ENCODE measurements at regions of chr2 and their contacts with region 1.

Region 1: GRCh38 chr2:85420536-85421259 is 2.2 kb downstream of the SH2D6 start:
- DNase-seq: peak; percentile 98
- H3K4me3 Mint-ChIP-seq: peak overlapping the region; percentile 62
- H3K27ac Mint-ChIP-seq: peak overlapping the region; percentile 88
- H3K4me1 Mint-ChIP-seq: peaks cover 28% of the 10 kb centered on the region
- H3K27me3 Mint-ChIP-seq: no peaks in the 10 kb centered on the region

Region 2: GRCh38 chr2:85215448-85216401 is 205.0 kb before region 1 on chr2:
- intact Hi-C with region 1: no loop called
- DNase-seq: no peak
- H3K4me3 Mint-ChIP-seq: no peak overlapping the region
- H3K27ac Mint-ChIP-seq: no peak overlapping the region
- H3K4me1 Mint-ChIP-seq: no peaks in the 10 kb centered on the region
- H3K27me3 Mint-ChIP-seq: peaks cover 22% of the 10 kb centered on the region

Region 3: GRCh38 chr2:85307527-85307897 is 113.2 kb before region 1 on chr2:
- intact Hi-C with region 1: no loop called
- DNase-seq: no peak
- H3K4me3 Mint-ChIP-seq: peak overlapping the region; percentile 54
- H3K27ac Mint-ChIP-seq: no peak overlapping the region
- H3K4me1 Mint-ChIP-seq: peaks cover 26% of the 10 kb centered on the region
- H3K27me3 Mint-ChIP-seq: peaks cover 9% of the 10 kb centered on the region

Region 4: DNA sequence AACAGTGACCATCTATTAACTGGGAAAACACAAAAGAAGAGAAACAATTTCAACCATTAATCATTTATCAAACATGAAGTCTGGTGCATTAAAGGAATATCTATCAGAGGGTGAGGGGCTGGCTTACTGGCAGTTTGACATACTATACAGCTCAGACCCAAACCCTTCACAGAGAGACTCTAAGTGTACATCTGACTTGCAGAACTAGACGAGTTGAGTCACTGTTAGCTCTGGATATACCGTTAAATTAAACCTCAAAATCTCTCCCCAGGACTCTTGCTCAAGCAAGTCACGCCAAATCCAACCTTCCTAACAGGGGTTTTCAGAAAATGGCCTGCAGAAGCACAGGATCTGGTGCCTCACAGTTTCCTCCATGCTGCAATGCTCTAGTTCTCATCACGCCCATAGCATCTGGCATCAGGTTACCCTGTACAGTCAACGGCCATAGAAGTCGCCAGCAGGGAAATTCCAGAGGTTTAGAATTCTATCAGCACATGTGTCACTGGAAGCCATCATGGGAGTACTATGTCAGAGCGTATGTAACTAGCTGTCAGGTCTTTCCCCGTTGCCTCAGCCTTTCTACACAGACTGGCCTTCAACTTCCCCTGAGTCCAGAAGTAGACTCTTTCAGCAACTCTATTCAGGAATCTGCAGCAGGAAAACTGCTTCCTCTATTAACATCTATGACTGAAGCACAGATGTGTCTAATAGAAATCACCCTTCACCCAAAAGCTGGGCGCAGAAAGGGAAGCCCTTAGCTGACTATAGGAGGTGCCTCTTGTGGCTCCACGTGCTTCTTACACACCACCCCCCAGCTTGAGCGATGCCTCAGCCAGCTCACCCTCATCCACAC is 102.2 kb before region 1 on chr2:
- intact Hi-C with region 1: no loop called
- DNase-seq: no peak
- H3K4me3 Mint-ChIP-seq: peak overlapping the region; percentile 35
- H3K27ac Mint-ChIP-seq: peak overlapping the region; percentile 89
- H3K4me1 Mint-ChIP-seq: peaks cover 48% of the 10 kb centered on the region
- H3K27me3 Mint-ChIP-seq: no peaks in the 10 kb centered on the region

Region 5: GRCh38 chr2:85354286-85355072 is 66.2 kb before region 1 on chr2 and contains the starts of genes ELMOD3 and RETSAT:
- intact Hi-C with region 1: loop called (anchors 1 kb)
- DNase-seq: peak; percentile 99
- H3K4me3 Mint-ChIP-seq: peak within 1 kb of the TSS; percentile 94
- H3K27ac Mint-ChIP-seq: peak within 1 kb of the TSS; percentile 94
- H3K4me1 Mint-ChIP-seq: peaks cover 26% of the 10 kb centered on the region
- H3K27me3 Mint-ChIP-seq: no peaks in the 10 kb centered on the region
- total RNA-seq, gene ELMOD3: 16.7 and 18.2 TPM in 2 replicates
- total RNA-seq, gene RETSAT: 21.0 and 25.0 TPM in 2 replicates

Region 6: GRCh38 chr2:85405076-85405402 is 15.7 kb before region 1 on chr2:
- intact Hi-C with region 1: loop called (anchors 1 kb)
- DNase-seq: no peak
- H3K4me3 Mint-ChIP-seq: peak overlapping the region; percentile 76
- H3K27ac Mint-ChIP-seq: peak overlapping the region; percentile 86
- H3K4me1 Mint-ChIP-seq: peaks cover 39% of the 10 kb centered on the region
- H3K27me3 Mint-ChIP-seq: no peaks in the 10 kb centered on the region

Region 7: GRCh38 chr2:85538486-85539360 is 118.0 kb after region 1 on chr2 and contains the start of gene MAT2A:
- intact Hi-C with region 1: loop called (anchors 1 kb)
- DNase-seq: peak; percentile 97
- H3K4me3 Mint-ChIP-seq: peak within 1 kb of the TSS; percentile 96
- H3K27ac Mint-ChIP-seq: peak within 1 kb of the TSS; percentile 98
- H3K4me1 Mint-ChIP-seq: peaks cover 36% of the 10 kb centered on the region
- H3K27me3 Mint-ChIP-seq: no peaks in the 10 kb centered on the region
- total RNA-seq, gene MAT2A: 481 and 492 TPM in 2 replicates

Region 8: DNA sequence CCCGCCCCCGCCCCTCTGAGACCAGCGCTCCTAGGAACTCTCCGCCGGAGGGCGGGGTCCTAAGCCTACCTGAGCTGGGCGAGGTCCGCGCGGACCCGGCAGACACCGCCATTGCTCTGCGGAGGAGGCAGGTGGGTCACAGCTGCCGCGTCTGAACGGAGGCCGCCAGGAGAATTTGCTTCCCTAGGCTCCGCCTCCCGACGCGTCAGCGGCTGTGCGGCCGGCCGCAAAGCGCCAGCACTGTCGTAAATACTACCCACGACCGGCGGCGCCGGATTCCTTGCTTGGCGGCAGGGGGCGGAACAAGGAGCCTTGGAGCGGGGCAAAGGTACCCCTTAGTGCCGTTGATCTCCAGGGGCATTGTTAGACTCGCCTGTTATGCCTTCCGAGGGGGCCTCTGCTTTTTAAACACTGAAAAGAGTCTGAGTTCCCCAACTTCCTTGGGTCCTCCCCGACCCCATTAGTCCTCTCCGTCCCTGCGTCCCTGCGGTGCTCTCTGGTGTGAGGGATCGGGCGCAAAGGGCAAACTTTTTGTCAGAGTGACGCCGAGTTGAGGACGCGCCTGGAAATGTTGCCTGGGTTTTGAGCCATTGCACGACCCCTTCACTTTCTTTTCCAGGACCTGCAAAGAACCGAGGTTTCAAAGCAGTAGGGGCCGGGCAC is 140.8 kb after region 1 on chr2 and contains the start of gene GGCX:
- intact Hi-C with region 1: loop called (anchors 1 kb)
- DNase-seq: peak; percentile 97
- H3K4me3 Mint-ChIP-seq: peak within 1 kb of the TSS; percentile 97
- H3K27ac Mint-ChIP-seq: peak within 1 kb of the TSS; percentile 96
- H3K4me1 Mint-ChIP-seq: peaks cover 30% of the 10 kb centered on the region
- H3K27me3 Mint-ChIP-seq: no peaks in the 10 kb centered on the region
- total RNA-seq, gene GGCX: 21.8 and 23.1 TPM in 2 replicates

Measured in activated CD4-positive, alpha-beta T cell treated with anti-CD3 and anti-CD28 coated beads, Interleukin-2, amount 10 ng/mL, durations not matched to agents 24 days and 14 days (primary cell).